ENCODE measurements at regions of chr9 and their contacts with region 1.

Region 1: GRCh38 chr9:89768650-89769071 is 163.8 kb downstream of the GADD45G start:
- DNase-seq: no peak
- ATAC-seq: no peak
- H3K4me3 ChIP-seq: no peak overlapping the region
- H3K4me3 Mint-ChIP-seq: no peak overlapping the region
- H3K27ac ChIP-seq: no peak overlapping the region
- H3K27ac Mint-ChIP-seq: peak overlapping the region in 1 of 9 donors; percentile 20
- H3K4me1 ChIP-seq: no peaks in the 10 kb centered on the region
- H3K4me1 Mint-ChIP-seq: peaks cover 0 to 20% (median 5%) of the 10 kb centered on the region in 7 donors
- H3K27me3 ChIP-seq: no peaks in the 10 kb centered on the region
- H3K27me3 Mint-ChIP-seq: peaks cover 0 to 21% (median 0%) of the 10 kb centered on the region in 5 donors

Region 2: DNA sequence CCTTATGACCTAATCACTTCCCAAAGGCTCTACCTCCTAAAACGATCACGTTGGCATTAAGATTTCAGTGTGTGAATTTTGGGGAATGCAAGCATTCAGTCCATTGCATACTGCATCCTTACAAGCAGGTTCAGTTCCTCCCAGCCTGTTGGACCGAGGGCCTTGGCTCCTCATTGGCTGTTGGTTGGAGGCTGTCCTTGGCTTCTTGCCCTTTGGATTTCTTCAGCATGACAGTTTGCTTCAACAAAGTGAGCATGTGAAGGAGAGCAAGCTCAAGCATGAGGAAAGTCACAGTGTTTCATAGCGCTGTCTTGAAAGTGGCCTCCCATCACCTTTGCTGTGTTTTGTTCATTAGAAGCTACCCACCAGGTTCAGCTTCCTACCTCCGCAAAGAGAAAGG is 54.3 kb before region 1 on chr9:
- CTCF ChIA-PET with region 1: no interaction called
- POLR2A ChIA-PET with region 1: no interaction called
- intact Hi-C with region 1: loop called in 1 of 2 experiments (anchors 5 kb)
- DNase-seq: no peak
- ATAC-seq: no peak
- H3K4me3 ChIP-seq: no peak overlapping the region
- H3K4me3 Mint-ChIP-seq: peak overlapping the region in 1 of 10 donors; percentile 53
- H3K27ac ChIP-seq: no peak overlapping the region
- H3K27ac Mint-ChIP-seq: peak overlapping the region in 1 of 9 donors; percentile 81
- H3K4me1 ChIP-seq: peaks cover 0 to 9% of the 10 kb centered on the region in 2 donors
- H3K4me1 Mint-ChIP-seq: peaks cover 2 to 70% (median 14%) of the 10 kb centered on the region in 7 donors
- H3K27me3 ChIP-seq: no peaks in the 10 kb centered on the region
- H3K27me3 Mint-ChIP-seq: no peaks in the 10 kb centered on the region